Naive thymus-derived CD4-positive, alpha-beta T cell (primary cell): ENCODE measurements at regions of chr14 and their contacts with region 1.

Region 1: DNA sequence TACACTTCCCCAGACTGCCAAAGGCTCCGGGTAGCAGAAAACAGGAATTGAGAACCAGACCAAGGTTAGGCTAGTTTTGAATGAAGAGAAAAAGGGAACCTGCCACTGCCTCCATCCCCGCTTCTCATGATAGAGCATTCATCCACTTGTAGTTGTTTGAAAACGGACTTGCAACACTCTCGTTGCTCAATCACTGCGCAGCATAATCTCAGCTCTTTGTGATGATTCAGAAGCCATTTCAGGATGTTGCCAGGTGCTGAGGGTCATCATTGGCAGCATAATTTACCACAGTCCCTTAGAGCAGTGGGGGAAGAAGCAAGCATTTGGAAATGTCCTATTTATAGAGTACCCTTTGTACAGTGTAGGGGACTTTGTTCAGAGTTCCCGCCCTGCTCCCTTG is 25.6 kb downstream of the KCNK13 start:
- DNase-seq: no peak
- ATAC-seq: peak; percentile 89
- H3K4me3 ChIP-seq: no peak overlapping the region
- H3K4me3 Mint-ChIP-seq: no peak overlapping the region
- H3K27ac ChIP-seq: no peak overlapping the region
- H3K27ac Mint-ChIP-seq: no peak overlapping the region
- H3K4me1 ChIP-seq: no peaks in the 10 kb centered on the region
- H3K4me1 Mint-ChIP-seq: no peaks in the 10 kb centered on the region
- H3K27me3 ChIP-seq: no peaks in the 10 kb centered on the region
- H3K27me3 Mint-ChIP-seq: peaks cover 14 to 37% (median 21%) of the 10 kb centered on the region in 5 donors

Region 2: DNA sequence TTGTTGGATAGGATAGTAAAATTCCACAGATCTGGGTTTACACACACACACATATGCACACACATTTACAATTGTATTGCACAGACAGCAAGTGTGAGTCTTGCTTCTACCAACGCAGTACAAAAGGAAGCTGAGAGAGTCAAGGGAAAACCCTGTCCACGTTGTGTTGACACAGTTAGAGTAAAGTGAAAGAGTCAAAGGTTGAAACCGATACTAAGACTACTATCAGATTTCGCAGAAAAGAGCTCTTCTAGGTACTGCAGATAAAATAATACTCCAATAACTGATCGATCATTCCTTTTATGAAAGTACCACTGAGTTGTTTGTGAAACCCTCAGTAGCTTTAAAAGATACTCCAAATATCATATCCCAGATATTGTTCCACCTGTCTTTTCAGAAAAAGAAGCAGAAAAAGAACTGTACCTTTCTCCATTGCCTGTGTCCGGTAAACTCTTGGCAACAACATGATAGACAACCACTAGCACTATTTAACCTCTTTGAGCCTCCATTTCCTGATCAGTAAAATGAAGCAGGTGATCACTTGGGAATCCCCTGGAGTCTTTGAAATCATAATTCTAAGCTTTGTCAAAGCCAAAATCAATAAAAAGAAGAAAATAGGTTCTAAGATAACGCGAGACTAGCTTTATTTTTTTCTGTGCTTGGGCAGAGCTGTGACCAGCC is 445.8 kb before region 1 on chr14:
- CTCF ChIA-PET with region 1: no interaction called
- POLR2A ChIA-PET with region 1: no interaction called
- intact Hi-C with region 1: no loop called
- DNase-seq: peak in 6 of 9 donors; percentile 25 to 52 (median 36)
- ATAC-seq: peak; percentile 88
- H3K4me3 ChIP-seq: peak overlapping the region; percentile 42
- H3K4me3 Mint-ChIP-seq: peak overlapping the region; percentile 58 to 87 (median 74)
- H3K27ac ChIP-seq: peak overlapping the region; percentile 81
- H3K27ac Mint-ChIP-seq: peak overlapping the region; percentile 75 to 99 (median 96)
- H3K4me1 ChIP-seq: peaks cover 13 to 45% of the 10 kb centered on the region in 2 donors
- H3K4me1 Mint-ChIP-seq: peaks cover 23 to 74% (median 60%) of the 10 kb centered on the region in 7 donors
- H3K27me3 ChIP-seq: no peaks in the 10 kb centered on the region
- H3K27me3 Mint-ChIP-seq: no peaks in the 10 kb centered on the region

Region 3: DNA sequence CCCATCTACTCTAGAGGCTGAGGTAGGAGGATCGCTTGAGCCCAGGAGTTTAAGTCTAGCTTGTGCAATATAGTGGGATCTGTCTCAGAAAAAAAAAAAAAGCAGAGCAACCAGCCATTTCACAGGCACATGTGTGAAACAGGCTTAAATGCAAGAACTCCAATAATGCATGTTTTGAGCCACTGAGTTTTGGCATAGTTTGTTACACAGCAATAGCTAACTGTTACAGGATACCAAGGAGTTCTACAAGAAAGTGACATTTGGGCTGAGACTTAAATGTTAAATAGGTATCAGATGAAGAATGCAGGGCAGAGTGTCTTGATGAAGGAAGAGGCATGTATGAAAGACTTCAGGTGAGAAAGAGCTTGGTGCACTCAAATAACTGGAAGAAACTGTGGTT is 430.4 kb before region 1 on chr14:
- CTCF ChIA-PET with region 1: interaction called, 10 read pairs
- POLR2A ChIA-PET with region 1: no interaction called
- intact Hi-C with region 1: no loop called
- DNase-seq: no peak
- ATAC-seq: no peak
- H3K4me3 ChIP-seq: no peak overlapping the region
- H3K4me3 Mint-ChIP-seq: no peak overlapping the region
- H3K27ac ChIP-seq: no peak overlapping the region
- H3K27ac Mint-ChIP-seq: no peak overlapping the region
- H3K4me1 ChIP-seq: no peaks in the 10 kb centered on the region
- H3K4me1 Mint-ChIP-seq: peaks cover 0 to 8% (median 4%) of the 10 kb centered on the region in 7 donors
- H3K27me3 ChIP-seq: no peaks in the 10 kb centered on the region
- H3K27me3 Mint-ChIP-seq: no peaks in the 10 kb centered on the region

Region 4: DNA sequence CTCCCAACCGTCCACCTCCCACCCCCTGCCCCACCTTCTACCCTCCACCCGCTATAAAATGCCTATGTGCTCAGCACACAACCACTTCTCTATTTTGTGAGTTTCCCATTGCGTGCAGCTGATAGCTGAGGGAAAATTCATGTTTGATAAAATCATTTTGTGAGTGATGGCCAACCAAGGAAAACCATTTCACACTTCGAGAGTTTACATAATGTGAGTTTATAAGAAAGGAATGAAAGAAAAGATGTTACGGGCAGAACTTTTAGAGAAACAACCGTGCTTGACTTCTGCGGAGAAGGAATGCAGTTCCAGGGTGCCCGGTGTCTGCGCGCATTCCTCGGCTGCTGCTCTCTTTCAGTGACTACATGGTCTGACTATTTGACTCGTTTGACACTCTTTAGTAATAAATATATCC is 273.8 kb before region 1 on chr14:
- CTCF ChIA-PET with region 1: no interaction called
- POLR2A ChIA-PET with region 1: no interaction called
- intact Hi-C with region 1: no loop called
- DNase-seq: no peak
- ATAC-seq: no peak
- H3K4me3 ChIP-seq: no peak overlapping the region
- H3K4me3 Mint-ChIP-seq: no peak overlapping the region
- H3K27ac ChIP-seq: no peak overlapping the region
- H3K27ac Mint-ChIP-seq: no peak overlapping the region
- H3K4me1 ChIP-seq: no peaks in the 10 kb centered on the region
- H3K4me1 Mint-ChIP-seq: no peaks in the 10 kb centered on the region
- H3K27me3 ChIP-seq: peaks cover 0 to 3% of the 10 kb centered on the region in 2 donors
- H3K27me3 Mint-ChIP-seq: peaks cover 0 to 22% (median 14%) of the 10 kb centered on the region in 5 donors

Region 5: GRCh38 chr14:90072350-90072749 is 15.1 kb before region 1 on chr14:
- CTCF ChIA-PET with region 1: no interaction called
- POLR2A ChIA-PET with region 1: no interaction called
- intact Hi-C with region 1: no loop called
- DNase-seq: no peak
- ATAC-seq: no peak
- H3K4me3 ChIP-seq: no peak overlapping the region
- H3K4me3 Mint-ChIP-seq: no peak overlapping the region
- H3K27ac ChIP-seq: no peak overlapping the region
- H3K27ac Mint-ChIP-seq: no peak overlapping the region
- H3K4me1 ChIP-seq: no peaks in the 10 kb centered on the region
- H3K4me1 Mint-ChIP-seq: no peaks in the 10 kb centered on the region
- H3K27me3 ChIP-seq: no peaks in the 10 kb centered on the region
- H3K27me3 Mint-ChIP-seq: peaks cover 18 to 55% (median 39%) of the 10 kb centered on the region in 5 donors

Region 6: GRCh38 chr14:90630171-90630806 is 542.9 kb after region 1 on chr14:
- CTCF ChIA-PET with region 1: no interaction called
- POLR2A ChIA-PET with region 1: no interaction called
- intact Hi-C with region 1: no loop called
- DNase-seq: no peak
- ATAC-seq: peak; percentile 84
- H3K4me3 ChIP-seq: no peak overlapping the region
- H3K4me3 Mint-ChIP-seq: no peak overlapping the region
- H3K27ac ChIP-seq: no peak overlapping the region
- H3K27ac Mint-ChIP-seq: no peak overlapping the region
- H3K4me1 ChIP-seq: no peaks in the 10 kb centered on the region
- H3K4me1 Mint-ChIP-seq: peaks cover 0 to 4% (median 0%) of the 10 kb centered on the region in 7 donors
- H3K27me3 ChIP-seq: peaks cover 0 to 5% of the 10 kb centered on the region in 2 donors
- H3K27me3 Mint-ChIP-seq: no peaks in the 10 kb centered on the region